CD8-positive, alpha-beta memory T cell (primary cell): ENCODE measurements at regions of chr13 and their contacts with region 1.

Region 1: DNA sequence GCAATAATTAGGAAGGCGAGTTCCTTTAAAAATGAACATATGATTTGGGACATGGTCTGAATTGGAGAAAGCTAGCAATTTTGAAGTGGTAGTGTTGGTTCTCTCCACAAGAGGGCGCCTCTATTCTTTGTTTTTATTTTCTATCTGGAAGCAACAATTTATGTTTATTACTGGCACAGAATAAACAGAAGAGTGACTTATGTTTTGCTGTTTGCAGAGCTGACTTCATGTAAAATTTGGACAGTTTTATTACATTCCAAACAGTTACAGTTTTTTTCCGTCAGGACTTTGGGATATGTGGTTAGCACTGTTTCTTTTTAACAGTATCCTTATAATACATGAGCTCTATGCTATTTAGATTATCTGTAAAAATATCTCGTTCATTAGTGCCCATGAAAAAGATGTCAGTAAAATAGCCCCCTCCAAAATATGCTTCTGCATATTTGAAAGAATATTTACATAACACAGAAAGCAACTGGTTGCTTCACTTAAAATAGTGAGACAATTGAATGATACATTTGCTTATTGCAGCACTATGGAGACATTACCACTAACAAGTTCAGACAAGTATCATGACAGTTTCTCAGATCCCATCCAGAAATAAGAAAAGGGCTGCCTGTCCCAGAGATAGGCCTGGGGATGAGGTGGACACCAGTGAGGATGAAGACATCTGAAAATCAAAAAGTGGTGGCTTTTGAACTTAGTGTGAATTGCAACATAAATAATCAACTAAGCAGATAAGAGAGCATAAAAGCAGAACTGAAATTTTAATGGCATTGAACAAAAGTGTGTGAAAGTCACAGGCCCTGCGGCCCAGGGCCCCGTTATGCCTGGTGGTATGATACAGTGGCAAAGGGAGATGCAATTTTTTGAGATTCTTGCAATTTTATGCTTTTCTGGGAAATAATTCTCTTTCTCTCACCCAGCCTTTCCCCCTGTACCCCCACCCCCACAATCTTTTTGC is 32.3 kb upstream of the FGF9 start:
- DNase-seq: peak in 4 of 5 donors; percentile 10 to 29 (median 18)
- H3K4me3 ChIP-seq: no peak overlapping the region
- H3K4me3 Mint-ChIP-seq: no peak overlapping the region
- H3K27ac ChIP-seq: no peak overlapping the region
- H3K27ac Mint-ChIP-seq: peak overlapping the region in 1 of 8 donors; percentile 63
- H3K4me1 ChIP-seq: no peaks in the 10 kb centered on the region
- H3K4me1 Mint-ChIP-seq: peaks cover 0 to 4% (median 0%) of the 10 kb centered on the region in 3 donors
- H3K27me3 ChIP-seq: no peaks in the 10 kb centered on the region
- H3K27me3 Mint-ChIP-seq: peaks cover 5 to 14% of the 10 kb centered on the region in 2 donors

Region 2: DNA sequence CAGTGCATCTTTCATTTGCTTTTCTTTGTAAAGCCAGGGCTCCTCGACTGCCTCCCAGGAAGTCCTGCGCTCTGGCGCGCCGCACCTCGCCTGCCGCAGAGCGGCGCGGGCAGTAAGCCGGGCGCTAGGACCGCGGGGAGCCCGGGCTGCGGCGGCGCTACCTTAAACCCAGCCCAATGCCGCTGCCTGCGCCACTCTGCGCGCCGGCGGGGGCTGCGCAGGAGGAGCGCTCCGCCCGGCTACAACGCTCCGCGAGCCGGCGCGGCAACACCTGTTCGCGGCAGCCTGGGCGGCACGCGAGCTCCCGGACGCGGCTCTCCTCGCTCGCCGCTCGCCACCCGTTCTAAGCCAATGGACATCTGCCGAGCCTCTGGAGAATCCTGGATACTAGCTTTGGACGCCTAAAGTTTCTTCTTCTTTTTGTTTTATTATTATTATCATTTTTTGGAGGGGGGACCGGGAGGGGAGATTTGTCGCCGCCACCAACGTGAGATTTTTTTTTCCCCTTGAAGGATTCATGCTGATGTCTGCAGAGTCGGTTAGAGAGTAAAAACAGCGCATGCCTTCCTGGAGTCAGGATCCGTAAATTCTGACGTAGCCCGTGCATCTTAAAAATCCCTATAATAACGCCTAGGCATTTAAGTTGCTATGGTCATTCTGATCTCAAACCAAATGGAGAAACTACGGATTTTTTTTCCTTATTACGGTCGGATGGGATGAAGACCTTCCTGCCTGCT is 32.5 kb after region 1 on chr13 and contains the start of gene FGF9:
- CTCF ChIA-PET with region 1: interaction called, 56 read pairs
- POLR2A ChIA-PET with region 1: interaction called, 4 read pairs
- DNase-seq: peak; percentile 74 to 87 (median 87)
- H3K4me3 ChIP-seq: peak within 1 kb of the TSS; percentile 98
- H3K4me3 Mint-ChIP-seq: peak within 1 kb of the TSS; percentile 88 to 98 (median 96)
- H3K27ac ChIP-seq: peak within 1 kb of the TSS; percentile 22
- H3K27ac Mint-ChIP-seq: peak within 1 kb of the TSS; percentile 63 to 93 (median 91)
- H3K4me1 ChIP-seq: peaks cover 38% of the 10 kb centered on the region
- H3K4me1 Mint-ChIP-seq: peaks cover 45 to 58% (median 53%) of the 10 kb centered on the region in 3 donors
- H3K27me3 ChIP-seq: peaks cover 13% of the 10 kb centered on the region
- H3K27me3 Mint-ChIP-seq: peaks cover 7 to 14% of the 10 kb centered on the region in 2 donors
- total RNA-seq, gene FGF9: 1.7 to 2.3 TPM

Region 3: GRCh38 chr13:22061351-22061805 is 422.8 kb after region 1 on chr13:
- CTCF ChIA-PET with region 1: interaction called, 18 read pairs
- POLR2A ChIA-PET with region 1: no interaction called
- DNase-seq: peak in 4 of 5 donors; percentile 37 to 82 (median 58)
- H3K4me3 ChIP-seq: no peak overlapping the region
- H3K4me3 Mint-ChIP-seq: peak overlapping the region; percentile 31 to 83 (median 52)
- H3K27ac ChIP-seq: peak overlapping the region; percentile 83
- H3K27ac Mint-ChIP-seq: peak overlapping the region; percentile 93 to 99 (median 98)
- H3K4me1 ChIP-seq: peaks cover 69% of the 10 kb centered on the region
- H3K4me1 Mint-ChIP-seq: peaks cover 84 to 95% (median 93%) of the 10 kb centered on the region in 3 donors
- H3K27me3 ChIP-seq: no peaks in the 10 kb centered on the region
- H3K27me3 Mint-ChIP-seq: no peaks in the 10 kb centered on the region

Region 4: DNA sequence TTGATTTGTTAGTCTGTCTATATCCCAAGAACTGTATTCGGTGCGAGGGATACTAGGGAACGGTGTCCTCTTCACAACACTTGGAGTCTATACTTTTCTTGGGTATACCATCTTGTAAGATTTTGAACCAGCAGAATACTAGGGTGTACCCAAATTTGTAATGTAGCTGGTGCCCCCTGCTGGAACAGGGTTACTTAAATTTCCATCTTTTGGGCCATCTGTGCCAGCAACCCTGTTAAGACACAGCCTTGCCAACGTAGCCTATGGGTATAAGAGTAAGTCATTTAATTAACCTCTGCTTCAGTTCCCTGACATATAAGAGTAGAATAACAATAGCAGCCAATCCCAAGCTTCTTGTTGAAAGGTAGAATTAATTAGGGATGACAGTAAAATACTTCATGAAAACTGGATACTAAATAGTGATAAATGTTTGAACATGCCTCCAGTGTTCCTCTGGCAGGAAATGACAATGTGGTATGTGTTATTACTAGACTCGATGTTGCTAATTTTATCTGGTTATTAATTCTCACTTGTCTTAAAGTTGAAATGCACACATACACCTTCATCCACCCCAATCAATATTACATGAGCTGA is 639.8 kb after region 1 on chr13:
- CTCF ChIA-PET with region 1: interaction called, 25 read pairs
- POLR2A ChIA-PET with region 1: no interaction called
- DNase-seq: peak; percentile 42 to 74 (median 49)
- H3K4me3 ChIP-seq: no peak overlapping the region
- H3K4me3 Mint-ChIP-seq: no peak overlapping the region
- H3K27ac ChIP-seq: no peak overlapping the region
- H3K27ac Mint-ChIP-seq: peak overlapping the region in 1 of 8 donors; percentile 2
- H3K4me1 ChIP-seq: no peaks in the 10 kb centered on the region
- H3K4me1 Mint-ChIP-seq: peaks cover 0 to 16% (median 12%) of the 10 kb centered on the region in 3 donors
- H3K27me3 ChIP-seq: no peaks in the 10 kb centered on the region
- H3K27me3 Mint-ChIP-seq: peaks cover 0 to 4% of the 10 kb centered on the region in 2 donors